CD4-positive, alpha-beta T cell (primary cell): ENCODE measurements at regions of chr18 and their contacts with region 1.

Region 1: DNA sequence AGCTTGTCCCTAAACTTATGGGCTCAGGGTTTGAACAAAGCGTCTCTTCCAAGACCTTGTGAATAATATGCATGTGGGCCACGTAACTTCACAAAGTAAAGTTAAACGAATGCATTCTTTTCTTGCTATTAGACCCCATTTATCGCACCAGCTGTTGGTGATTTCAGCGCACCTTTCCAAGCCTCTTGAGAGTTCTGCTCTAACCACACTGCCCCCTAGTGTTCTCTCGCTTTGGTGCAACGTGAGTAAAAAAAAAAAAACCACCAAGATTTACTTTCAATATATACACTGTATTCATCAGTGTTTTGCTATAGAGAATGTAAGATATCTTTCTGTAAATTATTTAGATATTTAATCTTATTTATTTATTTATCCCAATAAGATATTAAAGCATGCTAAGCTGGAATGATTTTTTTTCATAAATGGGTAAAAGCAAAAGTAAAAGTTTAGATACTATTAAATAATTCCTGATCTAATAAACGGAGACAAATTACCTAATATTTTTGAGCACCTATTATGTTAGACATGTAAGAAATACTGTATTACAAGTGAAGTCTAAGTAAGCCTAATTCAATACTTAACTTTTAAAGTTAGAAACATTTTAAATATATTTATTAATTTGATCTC is 459.5 kb downstream of the DLGAP1 start:
- DNase-seq: peak in 13 of 14 experiments; percentile 8 to 78 (median 35)
- ATAC-seq: peak; percentile 56
- H3K4me3 ChIP-seq: no peak overlapping the region
- H3K4me3 Mint-ChIP-seq: no peak overlapping the region
- H3K27ac ChIP-seq: no peak overlapping the region
- H3K27ac Mint-ChIP-seq: no peak overlapping the region
- H3K4me1 ChIP-seq: no peaks in the 10 kb centered on the region
- H3K4me1 Mint-ChIP-seq: no peaks in the 10 kb centered on the region
- H3K27me3 ChIP-seq: no peaks in the 10 kb centered on the region
- H3K27me3 Mint-ChIP-seq: peaks cover 5% of the 10 kb centered on the region
- CTCF ChIP-seq: peak; percentile 76

Region 2: GRCh38 chr18:3281456-3282400 is 713.9 kb before region 1 on chr18:
- CTCF ChIA-PET with region 1: no interaction called
- POLR2A ChIA-PET with region 1: no interaction called
- intact Hi-C with region 1: loop called (anchors 5 kb)
- DNase-seq: peak in 3 of 14 experiments; percentile 79 to 83 (median 83)
- ATAC-seq: peak; percentile 87
- H3K4me3 ChIP-seq: no peak overlapping the region
- H3K4me3 Mint-ChIP-seq: no peak overlapping the region
- H3K27ac ChIP-seq: no peak overlapping the region
- H3K27ac Mint-ChIP-seq: no peak overlapping the region
- H3K4me1 ChIP-seq: no peaks in the 10 kb centered on the region
- H3K4me1 Mint-ChIP-seq: no peaks in the 10 kb centered on the region
- H3K27me3 ChIP-seq: no peaks in the 10 kb centered on the region
- H3K27me3 Mint-ChIP-seq: no peaks in the 10 kb centered on the region
- CTCF ChIP-seq: peak; percentile 82

Region 3: GRCh38 chr18:3703732-3704176 is 291.8 kb before region 1 on chr18:
- CTCF ChIA-PET with region 1: no interaction called
- POLR2A ChIA-PET with region 1: no interaction called
- intact Hi-C with region 1: loop called in 1 of 2 experiments (anchors 10 kb)
- DNase-seq: peak in 6 of 14 experiments; percentile 1 to 42 (median 11)
- ATAC-seq: no peak
- H3K4me3 ChIP-seq: no peak overlapping the region
- H3K4me3 Mint-ChIP-seq: no peak overlapping the region
- H3K27ac ChIP-seq: no peak overlapping the region
- H3K27ac Mint-ChIP-seq: no peak overlapping the region
- H3K4me1 ChIP-seq: no peaks in the 10 kb centered on the region
- H3K4me1 Mint-ChIP-seq: peaks cover 5% of the 10 kb centered on the region
- H3K27me3 ChIP-seq: peaks cover 16 to 17% of the 10 kb centered on the region in 2 experiments
- H3K27me3 Mint-ChIP-seq: peaks cover 45% of the 10 kb centered on the region
- CTCF ChIP-seq: peak; percentile 42

Region 4: GRCh38 chr18:3771121-3771971 is 224.2 kb before region 1 on chr18:
- CTCF ChIA-PET with region 1: interaction called, 3 read pairs
- POLR2A ChIA-PET with region 1: no interaction called
- intact Hi-C with region 1: loop called (anchors 1 to 2 kb)
- DNase-seq: peak; percentile 41 to 81 (median 60)
- ATAC-seq: peak; percentile 98
- H3K4me3 ChIP-seq: peak overlapping the region; percentile 28
- H3K4me3 Mint-ChIP-seq: peak overlapping the region; percentile 64
- H3K27ac ChIP-seq: no peak overlapping the region
- H3K27ac Mint-ChIP-seq: no peak overlapping the region
- H3K4me1 ChIP-seq: peaks cover 9% of the 10 kb centered on the region
- H3K4me1 Mint-ChIP-seq: peaks cover 14% of the 10 kb centered on the region
- H3K27me3 ChIP-seq: peaks cover 0 to 12% of the 10 kb centered on the region in 2 experiments
- H3K27me3 Mint-ChIP-seq: peaks cover 46% of the 10 kb centered on the region
- CTCF ChIP-seq: peak; percentile 75

Region 5: GRCh38 chr18:3983351-3983969 is 12.1 kb before region 1 on chr18:
- CTCF ChIA-PET with region 1: interaction called, 18 read pairs
- POLR2A ChIA-PET with region 1: no interaction called
- intact Hi-C with region 1: no loop called
- DNase-seq: no peak
- ATAC-seq: no peak
- H3K4me3 ChIP-seq: no peak overlapping the region
- H3K4me3 Mint-ChIP-seq: no peak overlapping the region
- H3K27ac ChIP-seq: no peak overlapping the region
- H3K27ac Mint-ChIP-seq: no peak overlapping the region
- H3K4me1 ChIP-seq: peaks cover 6% of the 10 kb centered on the region
- H3K4me1 Mint-ChIP-seq: peaks cover 20% of the 10 kb centered on the region
- H3K27me3 ChIP-seq: no peaks in the 10 kb centered on the region
- H3K27me3 Mint-ChIP-seq: no peaks in the 10 kb centered on the region
- CTCF ChIP-seq: no peak